Activated B cell treated with CpG ODN at 0.5 μM for 24 hours (primary cell): ENCODE measurements at regions of chr6 and their contacts with region 1.

Region 1: DNA sequence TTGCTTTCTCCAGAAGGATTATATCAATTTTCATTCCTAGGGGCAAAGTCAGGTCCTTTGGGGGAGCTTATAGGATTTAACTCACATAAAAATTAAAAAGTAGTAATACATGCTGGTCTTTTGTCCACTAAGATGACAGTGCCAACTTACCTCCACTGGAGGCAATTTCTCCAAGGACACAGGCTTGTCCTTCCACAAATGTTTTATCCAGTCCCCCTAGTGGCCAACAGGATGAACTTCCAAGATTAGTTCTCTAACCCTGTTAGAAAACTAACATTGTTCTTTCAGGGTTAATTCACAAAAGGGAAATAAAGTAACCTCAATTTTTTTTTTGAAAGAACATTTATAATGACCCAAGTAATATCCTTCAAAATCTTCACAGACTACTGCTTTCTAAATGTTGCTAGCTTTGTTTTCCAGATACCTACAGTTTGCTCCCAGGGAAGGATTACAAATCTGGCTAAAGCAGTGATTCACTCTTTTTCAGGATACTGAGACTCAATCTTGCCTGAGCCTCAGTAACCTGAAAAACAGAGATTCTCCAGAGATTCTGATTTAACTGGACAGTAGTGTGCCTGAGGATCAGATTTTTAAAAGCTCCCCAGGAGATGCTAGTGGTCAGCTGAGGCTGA is 31.7 kb upstream of the UBR2 start:
- DNase-seq: no peak
- ATAC-seq: peak; percentile 64
- H3K4me3 Mint-ChIP-seq: no peak overlapping the region
- H3K27ac Mint-ChIP-seq: no peak overlapping the region
- H3K4me1 Mint-ChIP-seq: no peaks in the 10 kb centered on the region
- H3K27me3 Mint-ChIP-seq: peaks cover 3% of the 10 kb centered on the region
- CTCF ChIP-seq: peak; percentile 58

Region 2: GRCh38 chr6:41846666-41847237 is 685.4 kb before region 1 on chr6:
- CTCF ChIA-PET with region 1: no interaction called
- POLR2A ChIA-PET with region 1: no interaction called
- intact Hi-C with region 1: no loop called
- DNase-seq: no peak
- ATAC-seq: peak; percentile 72
- H3K4me3 Mint-ChIP-seq: no peak overlapping the region
- H3K27ac Mint-ChIP-seq: no peak overlapping the region
- H3K4me1 Mint-ChIP-seq: no peaks in the 10 kb centered on the region
- H3K27me3 Mint-ChIP-seq: no peaks in the 10 kb centered on the region
- CTCF ChIP-seq: no peak

Region 3: DNA sequence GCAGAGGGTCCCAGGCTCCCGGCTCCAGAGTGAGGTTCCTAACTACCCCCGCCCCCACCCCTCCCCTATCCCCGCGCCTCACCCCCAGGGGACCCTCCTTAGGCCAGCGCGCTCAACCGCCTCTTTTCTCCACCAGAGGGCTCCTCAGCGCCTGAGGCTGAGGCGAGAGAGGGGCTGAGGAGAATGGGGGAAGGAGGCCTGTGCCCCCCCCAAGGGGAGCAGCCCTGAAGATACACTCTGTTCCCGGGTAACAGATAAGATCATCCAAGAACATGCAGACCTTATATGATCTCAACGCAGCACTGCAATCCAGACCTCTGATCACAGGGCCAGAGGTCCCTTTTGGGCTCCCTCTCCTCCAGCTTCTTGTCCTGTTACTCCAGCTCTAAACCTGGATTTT is 271.2 kb before region 1 on chr6:
- CTCF ChIA-PET with region 1: interaction called, 7 read pairs
- POLR2A ChIA-PET with region 1: no interaction called
- intact Hi-C with region 1: loop called (anchors 5 kb)
- DNase-seq: no peak
- ATAC-seq: peak; percentile 49
- H3K4me3 Mint-ChIP-seq: no peak overlapping the region
- H3K27ac Mint-ChIP-seq: no peak overlapping the region
- H3K4me1 Mint-ChIP-seq: no peaks in the 10 kb centered on the region
- H3K27me3 Mint-ChIP-seq: no peaks in the 10 kb centered on the region
- CTCF ChIP-seq: no peak

Region 4: DNA sequence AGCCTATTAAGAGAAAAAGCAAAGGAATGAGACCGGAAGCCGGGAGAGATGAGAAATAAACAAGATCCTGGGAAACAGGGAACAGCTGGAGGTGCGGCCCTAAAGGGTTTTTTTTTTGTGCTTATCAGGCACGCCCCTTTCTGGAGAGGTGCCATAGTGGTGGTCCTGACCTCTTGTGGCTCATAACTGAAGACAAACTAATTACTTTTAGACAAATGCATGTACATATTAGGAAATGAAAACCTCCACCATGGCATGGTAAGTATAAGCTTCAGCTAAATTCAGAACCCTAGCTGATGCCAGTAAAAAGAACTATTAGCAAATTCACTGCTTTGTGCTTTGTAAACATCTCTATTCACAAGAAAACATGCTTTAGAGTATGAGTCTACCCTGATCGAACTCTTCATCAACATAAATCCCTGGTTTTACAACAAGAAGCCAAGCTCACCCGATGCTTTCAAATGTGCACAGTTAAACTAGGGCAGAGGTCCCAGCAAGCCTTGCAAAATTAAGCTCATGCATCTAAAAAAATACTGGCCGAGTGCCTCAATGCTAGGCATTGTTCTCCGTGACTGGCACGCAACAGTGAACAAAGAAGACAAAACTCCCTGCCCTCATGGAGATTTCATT is 218.1 kb before region 1 on chr6:
- CTCF ChIA-PET with region 1: no interaction called
- POLR2A ChIA-PET with region 1: no interaction called
- intact Hi-C with region 1: loop called (anchors 1 kb)
- DNase-seq: no peak
- ATAC-seq: no peak
- H3K4me3 Mint-ChIP-seq: no peak overlapping the region
- H3K27ac Mint-ChIP-seq: no peak overlapping the region
- H3K4me1 Mint-ChIP-seq: peaks cover 17% of the 10 kb centered on the region
- H3K27me3 Mint-ChIP-seq: no peaks in the 10 kb centered on the region
- CTCF ChIP-seq: no peak

Region 5: DNA sequence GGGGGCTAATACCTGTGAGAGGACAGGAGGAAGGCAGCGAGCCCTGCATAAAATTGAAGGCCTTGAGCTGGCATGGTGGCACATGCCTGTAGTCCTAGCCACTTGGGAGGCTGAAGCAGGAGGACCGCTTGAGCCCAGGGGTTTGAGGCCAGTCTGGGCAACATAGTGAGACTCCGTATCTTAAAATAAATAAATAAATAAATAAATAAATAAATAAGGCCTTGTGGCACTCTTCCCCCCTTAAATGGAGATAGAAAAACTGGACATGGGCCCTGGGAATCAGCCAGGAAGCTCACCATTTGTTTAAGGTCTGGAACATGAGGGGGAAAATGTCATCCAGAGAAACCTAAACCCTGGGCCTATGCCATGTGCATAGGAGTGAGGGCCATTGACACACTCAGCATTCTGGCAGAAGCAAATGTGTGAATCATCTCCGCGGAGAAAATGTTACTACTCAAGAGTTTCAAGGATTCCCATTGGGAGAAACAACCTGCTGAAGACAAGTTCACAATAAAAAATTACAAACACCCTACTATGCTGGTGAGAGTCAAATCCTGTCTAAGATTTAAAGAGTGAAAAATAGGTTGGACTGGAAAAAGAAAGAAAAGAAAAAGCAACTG is 20.2 kb before region 1 on chr6:
- CTCF ChIA-PET with region 1: interaction called, 15 read pairs
- POLR2A ChIA-PET with region 1: no interaction called
- intact Hi-C with region 1: no loop called
- DNase-seq: no peak
- ATAC-seq: no peak
- H3K4me3 Mint-ChIP-seq: no peak overlapping the region
- H3K27ac Mint-ChIP-seq: no peak overlapping the region
- H3K4me1 Mint-ChIP-seq: peaks cover 22% of the 10 kb centered on the region
- H3K27me3 Mint-ChIP-seq: no peaks in the 10 kb centered on the region
- CTCF ChIP-seq: no peak

Region 6: GRCh38 chr6:42520786-42521607 is 11.2 kb before region 1 on chr6:
- CTCF ChIA-PET with region 1: interaction called, 18 read pairs
- POLR2A ChIA-PET with region 1: interaction called, 3 read pairs
- intact Hi-C with region 1: loop called (anchors 1 kb)
- DNase-seq: no peak
- ATAC-seq: peak; percentile 92
- H3K4me3 Mint-ChIP-seq: peak overlapping the region; percentile 71
- H3K27ac Mint-ChIP-seq: peak overlapping the region; percentile 99
- H3K4me1 Mint-ChIP-seq: peaks cover 22% of the 10 kb centered on the region
- H3K27me3 Mint-ChIP-seq: no peaks in the 10 kb centered on the region
- CTCF ChIP-seq: no peak